Activated CD4-positive, alpha-beta memory T cell treated with anti-CD3 and anti-CD28 coated beads, Interleukin-2, amount 10 ng/mL, durations not matched to agents 7 days and 5 days (primary cell): ENCODE measurements at regions of chr3 and their contacts with region 1.

Region 1: GRCh38 chr3:190696777-190697501 is 165.6 kb downstream of the GMNC start:
- DNase-seq: no peak
- H3K4me3 Mint-ChIP-seq: no peak overlapping the region
- H3K27ac Mint-ChIP-seq: no peak overlapping the region
- H3K4me1 Mint-ChIP-seq: peaks cover 6% of the 10 kb centered on the region
- H3K27me3 Mint-ChIP-seq: peaks cover 17% of the 10 kb centered on the region

Region 2: DNA sequence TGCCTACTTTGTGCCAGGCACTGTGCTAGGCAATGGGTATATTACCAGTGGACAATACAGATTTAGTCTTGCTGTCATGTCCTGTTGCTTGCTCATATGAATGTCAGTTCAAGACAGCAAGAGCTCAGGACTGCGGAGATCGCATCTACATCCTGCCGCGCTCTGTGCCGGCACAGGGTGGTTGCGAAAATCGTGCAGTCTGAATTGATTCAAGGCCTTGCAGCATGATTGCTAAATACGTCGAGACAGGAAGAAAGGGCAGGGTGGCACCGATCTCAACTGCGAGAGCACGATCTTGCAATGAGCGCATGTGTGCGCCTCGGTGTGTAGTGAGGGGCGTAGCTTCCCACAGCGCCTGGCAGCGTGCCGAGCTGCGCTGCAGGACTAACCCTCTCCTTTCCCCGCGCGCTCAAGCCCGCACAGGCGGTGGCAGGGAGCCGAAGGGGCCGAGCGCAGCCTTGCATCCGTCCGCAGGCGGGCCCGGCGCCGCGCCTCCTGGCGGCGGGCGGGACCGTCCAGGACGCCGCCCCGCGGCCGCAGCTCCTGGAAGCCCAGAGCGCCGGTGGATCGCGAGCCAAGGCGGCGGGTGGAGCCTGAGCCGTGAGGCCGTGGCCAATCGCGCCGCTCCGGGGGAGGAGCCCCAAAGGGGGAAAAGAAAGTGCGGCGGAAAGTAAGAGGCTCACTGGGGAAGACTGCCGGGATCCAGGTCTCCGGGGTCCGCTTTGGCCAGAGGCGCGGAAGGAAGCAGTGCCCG is 183.4 kb before region 1 on chr3 and contains the start of gene IL1RAP:
- CTCF ChIA-PET with region 1: interaction called, 22 read pairs
- POLR2A ChIA-PET with region 1: interaction called, 9 read pairs
- DNase-seq: peak; percentile 90
- H3K4me3 Mint-ChIP-seq: peak within 1 kb of the TSS; percentile 75
- H3K27ac Mint-ChIP-seq: peak within 1 kb of the TSS; percentile 90
- H3K4me1 Mint-ChIP-seq: peaks cover 40% of the 10 kb centered on the region
- H3K27me3 Mint-ChIP-seq: peaks cover 5% of the 10 kb centered on the region
- total RNA-seq, gene IL1RAP: 14.2 to 15.2 TPM

Region 3: DNA sequence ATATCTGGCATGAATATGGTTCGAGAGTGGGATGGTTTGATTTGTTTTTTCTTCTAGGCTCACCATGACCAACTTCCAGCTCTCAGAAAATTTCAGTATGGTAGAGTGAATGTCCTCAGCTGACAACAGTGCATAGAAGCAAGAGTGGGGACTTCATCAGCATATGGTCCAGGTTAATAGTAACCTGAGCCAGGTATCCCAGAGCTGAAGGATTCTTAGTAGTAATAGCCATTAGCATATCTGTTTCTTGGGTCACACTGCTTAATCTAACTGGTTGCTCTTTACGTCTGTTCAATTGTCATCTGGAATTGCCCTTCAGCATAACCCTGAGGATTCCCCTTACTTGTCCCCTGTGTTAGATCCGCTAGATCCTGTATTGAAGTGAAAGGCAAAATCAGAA is 13.8 kb after region 1 on chr3:
- CTCF ChIA-PET with region 1: no interaction called
- POLR2A ChIA-PET with region 1: no interaction called
- DNase-seq: no peak
- H3K4me3 Mint-ChIP-seq: no peak overlapping the region
- H3K27ac Mint-ChIP-seq: no peak overlapping the region
- H3K4me1 Mint-ChIP-seq: no peaks in the 10 kb centered on the region
- H3K27me3 Mint-ChIP-seq: peaks cover 12% of the 10 kb centered on the region